ENCODE measurements at regions of chr17 and their contacts with region 1.

Region 1: GRCh38 chr17:51046514-51047384 is 73.9 kb downstream of the SPAG9 start:
- DNase-seq: peak; percentile 66

Region 2: GRCh38 chr17:51015145-51015558 is 31.6 kb before region 1 on chr17:
- CTCF ChIA-PET with region 1: no interaction called
- POLR2A ChIA-PET with region 1: no interaction called
- DNase-seq: no peak

Region 3: DNA sequence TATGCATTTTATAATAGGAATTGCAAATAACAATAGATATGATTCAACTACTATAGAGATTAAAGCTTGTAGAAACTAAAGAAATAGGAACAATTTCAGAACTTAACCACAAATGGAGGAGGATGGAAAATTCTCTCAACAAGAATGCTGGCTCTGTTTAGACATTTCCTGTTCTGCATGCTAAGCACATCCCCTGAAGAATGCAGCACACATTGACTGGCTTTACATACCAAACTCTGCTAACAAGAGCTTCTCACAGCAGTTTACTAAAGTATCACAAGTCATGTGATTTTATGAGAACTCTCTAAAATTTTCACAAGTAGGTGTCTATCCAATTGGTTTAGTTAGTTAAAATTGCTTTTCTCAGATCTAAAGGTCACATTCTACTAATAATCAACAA is 11.3 kb before region 1 on chr17:
- CTCF ChIA-PET with region 1: no interaction called
- POLR2A ChIA-PET with region 1: no interaction called
- DNase-seq: no peak

Region 4: DNA sequence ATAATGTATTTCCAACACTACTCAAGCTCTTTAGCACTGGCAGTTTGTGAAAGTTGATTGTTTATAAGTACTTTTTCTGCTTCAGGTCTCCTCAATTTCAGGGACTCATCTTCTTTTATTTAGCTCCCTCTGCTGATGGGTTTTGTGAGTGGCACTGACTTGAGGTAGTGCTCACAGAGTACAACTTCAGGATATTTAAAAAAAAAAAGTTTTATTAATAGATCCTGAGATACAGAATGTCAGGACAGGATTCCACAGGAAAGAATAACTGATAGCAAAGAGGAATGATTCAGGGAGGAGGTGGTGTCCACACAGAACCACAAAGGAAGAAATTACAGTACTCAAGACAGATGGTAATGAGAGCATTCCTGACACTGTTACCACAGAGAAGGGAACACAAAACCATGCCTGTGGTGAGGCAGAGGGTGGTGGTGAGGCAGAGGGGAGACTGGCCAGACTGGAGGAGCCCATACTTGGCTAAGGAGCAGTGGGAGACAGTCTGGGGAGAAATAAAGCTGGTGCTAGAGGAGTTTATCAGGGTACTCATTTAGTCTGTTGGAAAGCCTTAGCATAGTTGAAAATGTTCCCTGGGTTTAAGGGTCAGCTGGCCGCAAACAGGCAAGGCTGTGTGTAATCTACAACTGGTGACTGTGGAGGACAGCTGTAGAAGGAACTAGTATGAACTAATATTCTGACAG is 10.2 kb after region 1 on chr17:
- CTCF ChIA-PET with region 1: interaction called, 13 read pairs
- POLR2A ChIA-PET with region 1: interaction called, 5 read pairs
- DNase-seq: peak; percentile 34

Region 5: GRCh38 chr17:51085185-51085805 is 38.5 kb after region 1 on chr17:
- CTCF ChIA-PET with region 1: no interaction called
- POLR2A ChIA-PET with region 1: no interaction called
- DNase-seq: no peak